Heart right ventricle (tissue), 16 donors: ENCODE measurements at regions of chr15 and their contacts with region 1.

Region 1: GRCh38 chr15:76912141-76912834 is 7.1 kb upstream of the SCAPER start:
- DNase-seq: no peak
- ATAC-seq: no peak
- H3K4me3 ChIP-seq: no peak overlapping the region
- H3K27ac ChIP-seq: no peak overlapping the region
- H3K4me1 ChIP-seq: no peaks in the 10 kb centered on the region
- H3K27me3 ChIP-seq: peaks cover 0 to 8% (median 0%) of the 10 kb centered on the region in 7 donors
- CTCF ChIP-seq: no peak

Region 2: GRCh38 chr15:75597667-75598341 is 1314.5 kb before region 1 on chr15:
- intact Hi-C with region 1: loop called in 1 of 10 experiments (anchors 10 kb)
- DNase-seq: no peak
- ATAC-seq: no peak
- H3K4me3 ChIP-seq: no peak overlapping the region
- H3K27ac ChIP-seq: peak overlapping the region in 1 of 10 donors; percentile 26
- H3K4me1 ChIP-seq: peaks cover 0 to 20% (median 13%) of the 10 kb centered on the region in 9 donors
- H3K27me3 ChIP-seq: no peaks in the 10 kb centered on the region
- CTCF ChIP-seq: peak in 7 of 9 donors; percentile 12 to 51 (median 41)